Panc1 (cell line): ENCODE measurements at regions of chr9 and their contacts with region 1.

Region 1: DNA sequence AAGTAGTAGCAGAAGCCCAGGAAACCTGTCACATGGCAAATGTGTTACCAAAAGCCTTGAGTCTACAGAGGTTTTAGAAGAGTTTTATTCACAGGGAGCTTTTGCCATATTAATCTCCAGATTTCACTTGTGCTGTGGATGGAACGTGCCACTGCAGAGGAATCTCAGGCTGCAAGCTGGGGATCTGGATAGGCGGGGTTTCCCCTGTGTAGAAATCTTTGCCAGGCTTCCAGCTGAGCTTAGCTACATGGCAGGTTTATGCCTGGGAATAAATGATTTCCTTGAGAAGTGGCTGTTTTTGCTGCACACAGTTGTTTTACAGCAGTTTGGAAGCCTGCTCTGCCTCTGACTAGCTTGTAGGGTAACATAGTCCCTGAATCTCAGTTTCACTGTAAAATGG is 224.6 kb upstream of the PLPPR1 start:
- DNase-seq: no peak
- ATAC-seq: no peak
- H3K4me3 ChIP-seq: no peak overlapping the region
- H3K27ac ChIP-seq: no peak overlapping the region
- H3K4me1 ChIP-seq: no peaks in the 10 kb centered on the region
- H3K27me3 ChIP-seq: no peaks in the 10 kb centered on the region
- CTCF ChIP-seq: no peak

Region 2: DNA sequence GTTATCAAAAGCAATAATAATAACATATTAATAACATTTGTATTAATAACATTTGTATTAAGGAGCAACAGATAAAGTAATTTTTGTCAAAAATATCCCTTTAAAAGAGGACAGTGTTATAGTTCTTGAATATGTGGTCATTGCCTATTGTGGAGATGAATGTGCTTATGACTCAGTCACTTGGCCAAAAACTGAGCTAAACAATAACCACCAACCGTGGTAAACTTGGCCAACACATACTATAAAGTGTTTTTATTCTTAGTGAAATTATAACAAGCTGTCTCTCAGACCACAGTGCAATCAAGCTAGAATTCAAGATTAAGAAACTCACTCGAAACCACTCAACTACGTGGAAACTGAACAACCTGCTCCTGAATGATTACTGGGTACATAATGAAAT is 65.4 kb after region 1 on chr9:
- CTCF ChIA-PET with region 1: no interaction called
- POLR2A ChIA-PET with region 1: no interaction called
- in situ Hi-C with region 1: no loop called
- intact Hi-C with region 1: loop called (anchors 10 kb)
- DNase-seq: no peak
- ATAC-seq: no peak
- H3K4me3 ChIP-seq: no peak overlapping the region
- H3K27ac ChIP-seq: no peak overlapping the region
- H3K4me1 ChIP-seq: no peaks in the 10 kb centered on the region
- H3K27me3 ChIP-seq: no peaks in the 10 kb centered on the region
- CTCF ChIP-seq: no peak

Region 3: DNA sequence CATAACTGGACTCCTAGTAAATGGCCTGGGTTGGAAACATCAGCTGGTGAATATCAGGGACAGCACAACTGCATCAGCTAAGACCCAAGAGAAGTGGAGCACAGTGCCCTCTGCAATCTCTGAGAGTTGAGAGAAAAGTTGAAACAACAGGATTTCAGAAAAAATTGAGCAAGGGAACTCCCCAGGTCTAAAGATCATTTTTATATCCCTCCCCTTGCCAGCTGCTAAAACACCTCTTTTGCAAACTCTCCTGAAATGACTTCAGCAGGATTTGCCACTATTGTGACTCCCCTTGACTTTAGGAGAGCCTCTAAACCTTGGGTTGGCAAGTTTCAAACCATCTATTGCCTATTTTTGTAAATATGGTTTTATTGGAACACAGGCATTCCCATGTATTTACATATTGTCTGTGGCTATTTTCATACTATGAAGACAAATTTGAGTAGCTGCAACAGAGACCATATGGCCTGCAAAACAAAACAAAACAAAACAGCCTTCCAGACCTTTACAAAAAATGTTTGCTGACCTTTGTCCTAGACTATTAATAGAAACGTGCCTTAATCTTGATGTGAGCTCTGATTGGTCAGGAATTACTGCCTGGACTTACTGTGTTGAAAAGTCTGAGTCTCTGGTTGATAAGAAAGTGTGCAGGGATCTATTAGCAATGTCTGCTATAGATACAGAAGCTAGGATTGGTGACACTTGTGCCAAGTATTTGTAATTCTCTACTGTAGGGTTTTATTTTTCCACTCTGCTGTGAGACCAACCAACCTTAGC is 186.8 kb after region 1 on chr9:
- CTCF ChIA-PET with region 1: no interaction called
- POLR2A ChIA-PET with region 1: no interaction called
- in situ Hi-C with region 1: no loop called
- intact Hi-C with region 1: no loop called
- DNase-seq: no peak
- ATAC-seq: no peak
- H3K4me3 ChIP-seq: no peak overlapping the region
- H3K27ac ChIP-seq: no peak overlapping the region
- H3K4me1 ChIP-seq: no peaks in the 10 kb centered on the region
- H3K27me3 ChIP-seq: no peaks in the 10 kb centered on the region
- CTCF ChIP-seq: no peak